ENCODE measurements at regions of chr17 and their contacts with region 1.

Region 1: GRCh38 chr17:39261286-39261685 is 35.5 kb upstream of the STAC2 start:
- DNase-seq: no peak
- ATAC-seq: no peak
- H3K4me3 ChIP-seq: no peak overlapping the region
- H3K27ac ChIP-seq: no peak overlapping the region
- H3K4me1 ChIP-seq: peaks cover 0 to 14% (median 7%) of the 10 kb centered on the region in 9 donors
- H3K27me3 ChIP-seq: no peaks in the 10 kb centered on the region
- CTCF ChIP-seq: peak in 6 of 9 donors; percentile 7 to 35 (median 16)

Region 2: GRCh38 chr17:39325528-39326240 is 64.4 kb after region 1 on chr17:
- intact Hi-C with region 1: no loop called
- DNase-seq: no peak
- ATAC-seq: no peak
- H3K4me3 ChIP-seq: no peak overlapping the region
- H3K27ac ChIP-seq: no peak overlapping the region
- H3K4me1 ChIP-seq: peaks cover 0 to 21% (median 5%) of the 10 kb centered on the region in 9 donors
- H3K27me3 ChIP-seq: no peaks in the 10 kb centered on the region
- CTCF ChIP-seq: no peak

Region 3: GRCh38 chr17:39380144-39380543 is 118.9 kb after region 1 on chr17:
- intact Hi-C with region 1: loop called in 1 of 10 experiments (anchors 10 kb)
- DNase-seq: no peak
- ATAC-seq: no peak
- H3K4me3 ChIP-seq: no peak overlapping the region
- H3K27ac ChIP-seq: no peak overlapping the region
- H3K4me1 ChIP-seq: peaks cover 0 to 18% (median 9%) of the 10 kb centered on the region in 9 donors
- H3K27me3 ChIP-seq: no peaks in the 10 kb centered on the region
- CTCF ChIP-seq: no peak

Region 4: GRCh38 chr17:39393736-39394135 is 132.4 kb after region 1 on chr17:
- intact Hi-C with region 1: loop called in 2 of 10 experiments (anchors 10 kb)
- DNase-seq: no peak
- ATAC-seq: peak in 2 of 8 donors; percentile 25 to 27
- H3K4me3 ChIP-seq: no peak overlapping the region
- H3K27ac ChIP-seq: peak overlapping the region in 1 of 10 donors; percentile 15
- H3K4me1 ChIP-seq: peaks cover 0 to 56% (median 19%) of the 10 kb centered on the region in 9 donors
- H3K27me3 ChIP-seq: no peaks in the 10 kb centered on the region
- CTCF ChIP-seq: peak in 5 of 9 donors; percentile 24 to 47 (median 42)

Measured in heart right ventricle (tissue), 16 donors.